Esophagus squamous epithelium (tissue), 5 donors: ENCODE measurements at regions of chr17 and their contacts with region 1.

Region 1: GRCh38 chr17:51537996-51538550 is 277.7 kb downstream of the UTP18 start:
- DNase-seq: no peak
- H3K4me3 ChIP-seq: no peak overlapping the region
- H3K27ac ChIP-seq: no peak overlapping the region
- H3K4me1 ChIP-seq: no peaks in the 10 kb centered on the region
- H3K27me3 ChIP-seq: no peaks in the 10 kb centered on the region
- CTCF ChIP-seq: no peak
- POLR2A ChIP-seq: no peak

Region 2: DNA sequence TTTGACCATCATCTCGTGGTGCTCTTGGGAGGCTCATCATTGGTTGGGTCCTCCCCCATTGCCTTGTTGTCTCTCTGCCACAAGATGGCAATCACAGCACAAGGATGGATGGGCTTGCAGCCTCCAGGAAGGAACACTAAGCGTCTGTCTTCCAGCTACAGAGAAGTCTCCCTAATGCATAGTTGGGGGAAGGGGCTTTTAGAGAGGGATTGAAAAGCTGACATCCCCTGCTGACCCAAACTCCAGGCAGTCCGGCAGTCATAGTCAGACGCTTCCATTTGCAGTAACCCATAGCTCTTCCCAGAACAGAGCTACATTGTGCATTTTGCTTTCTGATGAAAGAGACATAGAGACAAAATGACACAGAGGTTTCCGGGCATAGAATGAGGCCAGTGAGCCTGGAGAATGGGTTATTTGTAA is 166.3 kb before region 1 on chr17:
- intact Hi-C with region 1: loop called (anchors 10 kb)
- DNase-seq: no peak
- H3K4me3 ChIP-seq: no peak overlapping the region
- H3K27ac ChIP-seq: no peak overlapping the region
- H3K4me1 ChIP-seq: no peaks in the 10 kb centered on the region
- H3K27me3 ChIP-seq: peaks cover 0 to 15% (median 0%) of the 10 kb centered on the region in 4 donors
- CTCF ChIP-seq: peak in 4 of 6 experiments; percentile 25 to 73 (median 52)
- POLR2A ChIP-seq: no peak

Region 3: DNA sequence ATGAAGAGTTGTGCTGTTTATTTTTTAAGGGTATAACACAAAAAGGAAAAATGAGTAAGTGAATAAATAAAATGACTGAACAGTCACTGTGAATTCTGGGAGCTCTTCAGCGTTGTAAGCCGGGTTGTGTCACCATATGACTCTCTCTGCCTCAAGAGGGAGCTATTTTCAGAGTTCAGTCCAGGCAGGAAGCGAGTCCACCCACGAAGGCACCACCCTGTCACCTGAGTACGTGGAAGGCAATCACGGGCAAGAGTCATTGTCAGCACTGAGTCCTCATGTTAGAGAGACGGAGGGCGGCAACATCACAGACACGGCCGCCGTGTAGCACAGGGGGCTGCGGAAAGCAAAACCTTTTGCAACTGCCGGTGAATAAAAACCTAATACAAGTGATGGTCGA is 50.1 kb before region 1 on chr17:
- intact Hi-C with region 1: no loop called
- DNase-seq: no peak
- H3K4me3 ChIP-seq: no peak overlapping the region
- H3K27ac ChIP-seq: no peak overlapping the region
- H3K4me1 ChIP-seq: peaks cover 0 to 6% (median 0%) of the 10 kb centered on the region in 3 donors
- H3K27me3 ChIP-seq: peaks cover 0 to 4% (median 0%) of the 10 kb centered on the region in 4 donors
- CTCF ChIP-seq: no peak
- POLR2A ChIP-seq: no peak

Region 4: GRCh38 chr17:51611585-51611984 is 73.5 kb after region 1 on chr17:
- intact Hi-C with region 1: no loop called
- DNase-seq: no peak
- H3K4me3 ChIP-seq: no peak overlapping the region
- H3K27ac ChIP-seq: no peak overlapping the region
- H3K4me1 ChIP-seq: no peaks in the 10 kb centered on the region
- H3K27me3 ChIP-seq: peaks cover 0 to 8% (median 0%) of the 10 kb centered on the region in 4 donors
- CTCF ChIP-seq: no peak
- POLR2A ChIP-seq: no peak